PC-9 (cell line): ENCODE measurements at regions of chr16 and their contacts with region 1.

Region 1: GRCh38 chr16:11977376-11978041 is 975 bp downstream of the SNX29 start:
- DNase-seq: peak; percentile 35 to 48
- H3K4me3 ChIP-seq: peak overlapping the region; percentile 93
- H3K27ac ChIP-seq: peak overlapping the region; percentile 44
- H3K4me1 ChIP-seq: peaks cover 19% of the 10 kb centered on the region; the same call in 1 of the 2 replicates
- H3K27me3 ChIP-seq: no peaks in the 10 kb centered on the region
- CTCF ChIP-seq: no peak

Region 2: DNA sequence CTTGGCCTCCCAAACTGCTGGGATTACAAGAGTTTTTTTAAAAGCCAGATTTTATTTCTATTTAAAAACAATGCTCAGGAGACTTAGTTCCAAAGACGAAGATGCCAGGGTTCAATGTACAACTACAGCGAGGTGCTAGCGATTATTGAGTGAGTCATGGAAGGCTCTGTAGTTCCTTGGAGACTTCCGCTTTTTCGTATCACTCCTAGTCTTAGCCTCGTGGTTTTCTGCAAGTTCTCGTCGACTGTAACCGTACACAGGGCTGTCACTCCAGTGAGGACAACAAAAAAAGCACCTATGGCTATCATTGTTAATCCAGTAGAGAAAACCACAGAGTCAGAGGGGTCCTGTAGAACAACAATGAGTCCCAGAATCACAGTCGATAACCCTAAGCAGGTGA is 157.7 kb before region 1 on chr16:
- CTCF ChIA-PET with region 1: no interaction called
- POLR2A ChIA-PET with region 1: no interaction called
- intact Hi-C with region 1: no loop called
- DNase-seq: no peak
- H3K4me3 ChIP-seq: no peak overlapping the region
- H3K27ac ChIP-seq: no peak overlapping the region
- H3K4me1 ChIP-seq: peaks cover 12% of the 10 kb centered on the region
- H3K27me3 ChIP-seq: no peaks in the 10 kb centered on the region
- CTCF ChIP-seq: no peak

Region 3: DNA sequence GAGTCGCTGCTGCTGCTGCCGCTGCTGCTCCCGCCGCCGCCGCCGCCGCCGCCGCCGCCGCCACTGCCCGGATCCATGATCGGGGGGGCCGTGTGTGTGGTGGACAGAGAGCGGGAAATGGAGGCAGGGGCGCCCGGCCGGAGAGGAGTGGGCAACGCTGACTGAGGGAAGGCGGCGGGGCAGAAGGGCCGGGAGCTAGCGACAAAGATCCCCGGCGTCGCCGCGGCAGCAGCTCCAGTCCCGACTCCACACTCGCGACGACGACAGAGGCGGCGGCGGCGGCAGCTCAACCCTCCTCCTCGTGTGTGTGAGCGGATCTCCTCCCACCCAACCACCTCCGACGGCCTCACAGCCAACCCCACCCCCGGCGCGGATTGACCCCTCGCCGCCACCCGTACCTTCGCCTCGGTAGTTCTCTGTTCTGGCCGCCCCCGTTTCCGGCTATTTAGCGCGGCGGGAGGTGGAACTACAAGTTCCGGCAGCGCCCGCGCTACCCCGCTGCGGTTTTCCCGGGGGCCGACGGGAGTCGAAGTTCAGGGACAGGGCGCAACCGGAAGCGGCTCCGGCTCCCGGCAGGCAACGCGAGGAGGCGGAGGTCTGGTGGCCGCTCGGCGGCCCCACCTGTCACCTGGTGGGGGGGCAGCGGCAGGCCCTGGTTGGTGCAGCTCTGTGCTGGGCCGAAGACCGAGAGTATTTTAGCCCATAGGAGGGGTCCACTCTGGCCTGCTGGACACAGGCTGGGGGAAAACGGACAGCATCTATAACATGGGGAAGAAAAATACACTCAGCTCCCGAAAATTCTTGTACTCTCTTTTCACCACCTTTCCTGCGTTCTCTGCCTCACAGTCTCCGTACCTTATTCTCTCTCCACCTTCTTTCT is 61.6 kb before region 1 on chr16 and contains the start of gene GSPT1:
- CTCF ChIA-PET with region 1: interaction called, 4 read pairs
- POLR2A ChIA-PET with region 1: interaction called, 13 read pairs
- intact Hi-C with region 1: loop called (anchors 5 kb)
- DNase-seq: peak; percentile 95 to 100
- H3K4me3 ChIP-seq: peak within 1 kb of the TSS; percentile 93
- H3K27ac ChIP-seq: peak within 1 kb of the TSS; percentile 97
- H3K4me1 ChIP-seq: peaks cover 40% of the 10 kb centered on the region
- H3K27me3 ChIP-seq: no peaks in the 10 kb centered on the region
- CTCF ChIP-seq: 0 out of 2 replicates have a peak, but pooled peaks have one; percentile 22
- total RNA-seq, gene GSPT1: 146 and 161 TPM in 2 replicates

Region 4: GRCh38 chr16:12010388-12011251 is 33.1 kb after region 1 on chr16:
- CTCF ChIA-PET with region 1: no interaction called
- POLR2A ChIA-PET with region 1: no interaction called
- intact Hi-C with region 1: no loop called
- DNase-seq: no peak
- H3K4me3 ChIP-seq: no peak overlapping the region
- H3K27ac ChIP-seq: no peak overlapping the region
- H3K4me1 ChIP-seq: no peaks in the 10 kb centered on the region
- H3K27me3 ChIP-seq: no peaks in the 10 kb centered on the region
- CTCF ChIP-seq: no peak

Region 5: GRCh38 chr16:12062343-12063005 is 85.0 kb after region 1 on chr16:
- CTCF ChIA-PET with region 1: no interaction called
- POLR2A ChIA-PET with region 1: interaction called, 3 read pairs
- intact Hi-C with region 1: loop called (anchors 5 kb)
- DNase-seq: peak; percentile 58 to 70
- H3K4me3 ChIP-seq: no peak overlapping the region
- H3K27ac ChIP-seq: no peak overlapping the region
- H3K4me1 ChIP-seq: no peaks in the 10 kb centered on the region
- H3K27me3 ChIP-seq: no peaks in the 10 kb centered on the region
- CTCF ChIP-seq: no peak